Gastrocnemius medialis (tissue), 4 donors: ENCODE measurements at regions of chr15 and their contacts with region 1.

Region 1: GRCh38 chr15:25424073-25424472 is 14.8 kb downstream of the UBE3A start:
- DNase-seq: no peak
- ATAC-seq: no peak
- H3K4me3 ChIP-seq: no peak overlapping the region
- H3K27ac ChIP-seq: peak overlapping the region in 1 of 4 donors; percentile 36
- H3K4me1 ChIP-seq: peaks cover 46 to 50% of the 10 kb centered on the region in 2 donors
- H3K27me3 ChIP-seq: no peaks in the 10 kb centered on the region
- CTCF ChIP-seq: no peak
- POLR2A ChIP-seq: no peak

Region 2: DNA sequence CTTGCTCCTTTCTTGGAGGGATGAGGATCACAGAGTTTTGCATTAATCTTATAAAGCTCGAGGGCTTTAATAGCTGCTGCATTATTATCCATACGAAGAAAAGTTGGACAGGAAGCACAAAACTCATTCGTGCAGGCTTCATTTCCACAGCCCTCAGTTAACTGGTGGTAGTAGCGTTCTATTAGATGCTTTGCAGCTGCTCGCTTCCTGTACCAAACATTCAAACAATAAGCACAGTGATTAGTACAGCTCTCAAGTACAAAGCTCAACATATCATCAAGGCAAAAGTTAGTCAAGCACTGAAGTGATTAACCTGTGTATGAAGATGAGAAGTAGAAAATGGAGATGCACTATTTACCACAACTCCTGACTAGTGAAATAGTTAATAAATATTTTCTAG is 48.5 kb before region 1 on chr15:
- in situ Hi-C with region 1: no loop called
- intact Hi-C with region 1: no loop called
- DNase-seq: no peak
- ATAC-seq: no peak
- H3K4me3 ChIP-seq: no peak overlapping the region
- H3K27ac ChIP-seq: no peak overlapping the region
- H3K4me1 ChIP-seq: peaks cover 4 to 13% of the 10 kb centered on the region in 2 donors
- H3K27me3 ChIP-seq: no peaks in the 10 kb centered on the region
- CTCF ChIP-seq: no peak
- POLR2A ChIP-seq: no peak

Region 3: GRCh38 chr15:25385986-25386385 is 38.1 kb before region 1 on chr15:
- in situ Hi-C with region 1: no loop called
- intact Hi-C with region 1: loop called (anchors 2 kb)
- DNase-seq: no peak
- ATAC-seq: no peak
- H3K4me3 ChIP-seq: no peak overlapping the region
- H3K27ac ChIP-seq: peak overlapping the region in 3 of 4 donors; percentile 13 to 20 (median 15)
- H3K4me1 ChIP-seq: peaks cover 2 to 3% of the 10 kb centered on the region in 2 donors
- H3K27me3 ChIP-seq: no peaks in the 10 kb centered on the region
- CTCF ChIP-seq: no peak
- POLR2A ChIP-seq: no peak

Region 4: DNA sequence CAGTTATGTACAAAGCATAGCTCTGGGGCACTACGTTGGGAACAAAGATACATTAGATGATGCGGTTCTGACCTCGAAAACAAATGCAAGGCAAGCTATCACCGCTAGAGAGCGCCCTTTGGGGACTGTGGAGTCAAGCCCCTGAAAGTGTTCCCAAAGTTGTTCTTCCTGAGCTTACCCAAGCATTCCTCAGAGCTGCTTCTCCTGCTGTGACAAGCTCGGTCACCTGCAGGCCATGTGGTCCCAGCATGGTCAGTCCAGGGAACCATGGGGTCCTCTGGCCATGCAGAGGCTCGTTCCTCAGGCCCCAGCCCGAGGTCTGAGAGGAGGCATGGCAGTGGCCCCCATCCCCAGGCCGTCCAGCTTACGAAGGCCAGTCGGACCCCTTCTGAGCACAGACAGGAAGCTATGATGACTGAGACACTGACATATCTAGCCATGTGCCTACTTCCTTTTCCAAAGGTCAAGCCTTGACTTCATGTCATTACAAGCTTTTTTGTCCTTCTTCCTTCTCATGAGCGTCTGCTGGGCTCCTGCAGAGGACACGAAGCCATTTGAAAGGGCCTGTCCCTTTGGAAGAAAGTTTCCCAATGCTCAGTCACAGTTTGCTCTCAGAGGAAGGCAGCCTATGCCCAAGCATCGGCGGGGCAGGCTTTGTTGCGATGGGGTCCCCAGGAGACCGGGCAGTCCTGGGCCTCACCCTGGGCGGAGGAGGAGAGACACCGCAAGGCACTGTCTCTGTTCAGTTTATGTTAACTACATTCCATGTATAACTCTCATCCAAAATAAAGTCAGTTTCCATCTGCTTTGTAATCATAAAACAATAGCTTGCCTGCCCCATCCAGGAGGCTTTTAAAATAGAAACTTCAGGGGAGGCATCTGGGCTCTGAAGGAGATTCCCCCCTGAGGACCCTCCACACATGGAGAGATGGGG is 359.8 kb after region 1 on chr15:
- in situ Hi-C with region 1: no loop called
- intact Hi-C with region 1: no loop called
- DNase-seq: no peak
- ATAC-seq: no peak
- H3K4me3 ChIP-seq: no peak overlapping the region
- H3K27ac ChIP-seq: no peak overlapping the region
- H3K4me1 ChIP-seq: peaks cover 0 to 6% of the 10 kb centered on the region in 2 donors
- H3K27me3 ChIP-seq: no peaks in the 10 kb centered on the region
- CTCF ChIP-seq: no peak
- POLR2A ChIP-seq: no peak